ENCODE measurements at regions of chr19 and their contacts with region 1.

Region 1: DNA sequence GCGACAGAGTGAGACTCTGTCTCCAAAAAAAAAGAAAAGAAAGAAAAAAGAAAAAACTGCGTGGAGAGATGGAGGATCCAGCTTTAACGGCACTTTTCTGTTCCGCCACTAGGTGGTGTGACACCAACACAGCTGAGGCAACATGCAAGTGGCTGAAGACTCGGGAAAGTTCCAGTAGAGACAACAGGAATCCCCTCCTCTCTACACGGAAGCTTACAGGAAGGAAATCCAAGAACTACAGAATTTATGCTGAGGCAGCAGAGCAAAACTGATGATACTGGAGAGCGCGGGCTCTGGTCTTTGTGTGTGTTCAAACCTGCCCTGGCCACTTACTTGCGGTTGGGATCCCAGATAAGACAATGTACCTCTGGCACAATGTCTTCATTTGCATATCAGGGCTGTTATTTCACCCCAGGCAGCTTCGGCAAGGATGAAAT is 9.9 kb downstream of the RANBP3 start:
- DNase-seq: peak; percentile 85

Region 2: GRCh38 chr19:5803752-5804515 is 164.1 kb before region 1 on chr19:
- intact Hi-C with region 1: loop called (anchors 5 kb)
- DNase-seq: peak; percentile 93

Region 3: GRCh38 chr19:5904352-5905113 is 63.5 kb before region 1 on chr19 and contains the start of gene VMAC:
- intact Hi-C with region 1: loop called (anchors 5 kb)
- DNase-seq: peak; percentile 100
- total RNA-seq, gene VMAC: 2.4 TPM

Region 4: GRCh38 chr19:5947435-5947834 is 20.6 kb before region 1 on chr19:
- intact Hi-C with region 1: no loop called
- DNase-seq: peak; percentile 80

Region 5: DNA sequence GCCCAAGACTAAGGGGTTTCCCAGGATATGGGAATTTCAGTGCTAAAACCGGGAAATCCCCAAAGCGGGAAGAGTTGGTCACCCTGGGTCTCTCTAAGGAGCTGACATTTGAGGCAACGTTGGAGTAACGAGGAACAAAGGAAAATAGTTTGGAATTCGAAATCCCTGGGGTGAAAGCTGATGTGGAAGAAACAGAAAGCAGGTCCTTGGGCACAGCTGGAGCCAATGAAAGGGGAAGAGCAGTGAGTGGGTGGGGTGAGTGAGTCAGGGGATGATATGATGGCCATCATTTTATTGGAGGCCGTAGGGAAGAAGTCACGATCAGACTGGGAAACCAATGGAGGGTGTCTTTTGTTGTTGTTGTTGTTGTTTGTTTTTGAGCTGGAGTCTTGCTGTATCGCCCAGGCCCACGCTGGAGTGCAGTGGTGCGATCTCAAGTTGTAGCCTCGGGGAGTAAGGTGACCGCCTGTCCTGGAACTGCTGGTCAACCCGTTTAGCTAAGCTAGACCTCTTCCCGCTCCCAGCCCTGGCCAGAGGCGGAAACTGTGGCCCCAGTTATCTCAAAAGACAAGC is 145.7 kb after region 1 on chr19:
- intact Hi-C with region 1: no loop called
- DNase-seq: no peak

Region 6: DNA sequence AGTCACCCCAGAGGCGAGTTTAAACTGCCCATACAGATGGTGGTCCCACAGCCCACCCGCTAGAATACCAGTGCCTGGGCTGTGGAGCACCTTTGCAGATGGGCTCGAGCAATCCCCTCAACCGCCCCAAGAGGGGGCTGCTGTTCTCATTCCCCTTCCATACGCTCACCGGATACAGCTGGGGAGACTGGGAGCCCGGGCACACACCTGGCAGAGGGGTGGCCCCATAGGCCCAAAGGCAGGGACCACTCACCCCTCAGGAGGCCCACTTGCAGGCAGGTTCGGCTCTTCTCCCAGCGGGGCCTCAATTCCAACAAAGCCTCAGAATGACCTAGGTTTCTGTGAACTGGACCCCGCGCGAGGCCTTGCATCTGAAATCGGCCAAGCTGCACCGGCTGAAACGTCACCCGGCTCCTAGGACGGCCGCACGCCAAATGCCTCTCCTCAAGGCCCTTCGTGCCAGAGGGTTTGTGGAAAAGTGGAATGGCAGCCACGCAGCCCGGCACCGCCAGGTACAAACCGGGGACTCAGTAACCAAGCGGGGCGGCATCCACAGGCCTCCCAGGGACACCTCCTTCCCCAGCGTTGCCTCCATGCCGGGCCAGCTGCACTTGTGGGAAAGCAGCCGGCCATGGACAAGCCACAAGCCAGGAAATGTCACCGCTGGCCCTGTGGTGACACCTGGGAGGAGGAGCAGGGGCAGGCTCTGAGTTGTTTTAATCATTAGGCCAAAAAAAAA is 293.1 kb after region 1 on chr19:
- intact Hi-C with region 1: no loop called
- DNase-seq: no peak